B cell (primary cell): ENCODE measurements at regions of chr10 and their contacts with region 1.

Region 1: GRCh38 chr10:80504158-80504811 is 33.4 kb upstream of the SH2D4B start:
- DNase-seq: peak; percentile 39
- ATAC-seq: peak; percentile 31
- H3K4me3 ChIP-seq: no peak overlapping the region
- H3K4me3 Mint-ChIP-seq: peak overlapping the region; percentile 34
- H3K27ac ChIP-seq: peak overlapping the region; percentile 5 to 19
- H3K27ac Mint-ChIP-seq: peak overlapping the region; percentile 85
- H3K4me1 ChIP-seq: peaks cover 54 to 66% of the 10 kb centered on the region in 2 donors
- H3K4me1 Mint-ChIP-seq: peaks cover 59% of the 10 kb centered on the region
- H3K27me3 ChIP-seq: no peaks in the 10 kb centered on the region
- H3K27me3 Mint-ChIP-seq: no peaks in the 10 kb centered on the region
- CTCF ChIP-seq: no peak

Region 2: GRCh38 chr10:80372675-80373074 is 131.6 kb before region 1 on chr10:
- CTCF ChIA-PET with region 1: interaction called, 273 read pairs
- POLR2A ChIA-PET with region 1: no interaction called
- intact Hi-C with region 1: no loop called
- DNase-seq: no peak
- ATAC-seq: no peak
- H3K4me3 ChIP-seq: no peak overlapping the region
- H3K4me3 Mint-ChIP-seq: no peak overlapping the region
- H3K27ac ChIP-seq: no peak overlapping the region
- H3K27ac Mint-ChIP-seq: no peak overlapping the region
- H3K4me1 ChIP-seq: no peaks in the 10 kb centered on the region
- H3K4me1 Mint-ChIP-seq: no peaks in the 10 kb centered on the region
- H3K27me3 ChIP-seq: no peaks in the 10 kb centered on the region
- H3K27me3 Mint-ChIP-seq: peaks cover 7% of the 10 kb centered on the region
- CTCF ChIP-seq: no peak

Region 3: GRCh38 chr10:80408242-80409101 is 95.8 kb before region 1 on chr10 and contains the start of gene PRXL2A:
- CTCF ChIA-PET with region 1: interaction called, 28 read pairs
- POLR2A ChIA-PET with region 1: no interaction called
- intact Hi-C with region 1: no loop called
- DNase-seq: peak; percentile 83
- ATAC-seq: peak; percentile 98
- H3K4me3 ChIP-seq: peak within 1 kb of the TSS; percentile 55 to 82 (median 77)
- H3K4me3 Mint-ChIP-seq: peak within 1 kb of the TSS; percentile 91
- H3K27ac ChIP-seq: peak within 1 kb of the TSS in 1 of 2 donors; percentile 13
- H3K27ac Mint-ChIP-seq: peak within 1 kb of the TSS; percentile 64
- H3K4me1 ChIP-seq: peaks cover 6 to 15% of the 10 kb centered on the region in 2 donors
- H3K4me1 Mint-ChIP-seq: peaks cover 13% of the 10 kb centered on the region
- H3K27me3 ChIP-seq: no peaks in the 10 kb centered on the region
- H3K27me3 Mint-ChIP-seq: peaks cover 5% of the 10 kb centered on the region
- CTCF ChIP-seq: no peak
- total RNA-seq, gene PRXL2A: 9.4 and 11.2 TPM in 2 replicates

Region 4: GRCh38 chr10:80431577-80431976 is 72.7 kb before region 1 on chr10:
- CTCF ChIA-PET with region 1: interaction called, 14 read pairs
- POLR2A ChIA-PET with region 1: interaction called, 4 read pairs
- intact Hi-C with region 1: no loop called
- DNase-seq: no peak
- ATAC-seq: no peak
- H3K4me3 ChIP-seq: no peak overlapping the region
- H3K4me3 Mint-ChIP-seq: no peak overlapping the region
- H3K27ac ChIP-seq: no peak overlapping the region
- H3K27ac Mint-ChIP-seq: no peak overlapping the region
- H3K4me1 ChIP-seq: no peaks in the 10 kb centered on the region
- H3K4me1 Mint-ChIP-seq: no peaks in the 10 kb centered on the region
- H3K27me3 ChIP-seq: no peaks in the 10 kb centered on the region
- H3K27me3 Mint-ChIP-seq: no peaks in the 10 kb centered on the region
- CTCF ChIP-seq: no peak

Region 5: GRCh38 chr10:80444646-80445319 is 59.5 kb before region 1 on chr10:
- CTCF ChIA-PET with region 1: interaction called, 500 read pairs
- POLR2A ChIA-PET with region 1: interaction called, 4 read pairs
- intact Hi-C with region 1: loop called (anchors 1 kb)
- DNase-seq: peak; percentile 80
- ATAC-seq: peak; percentile 88
- H3K4me3 ChIP-seq: no peak overlapping the region
- H3K4me3 Mint-ChIP-seq: no peak overlapping the region
- H3K27ac ChIP-seq: no peak overlapping the region
- H3K27ac Mint-ChIP-seq: no peak overlapping the region
- H3K4me1 ChIP-seq: peaks cover 0 to 6% of the 10 kb centered on the region in 2 donors
- H3K4me1 Mint-ChIP-seq: peaks cover 9% of the 10 kb centered on the region
- H3K27me3 ChIP-seq: no peaks in the 10 kb centered on the region
- H3K27me3 Mint-ChIP-seq: no peaks in the 10 kb centered on the region
- CTCF ChIP-seq: peak; percentile 58

Region 6: GRCh38 chr10:80472234-80473095 is 31.8 kb before region 1 on chr10:
- CTCF ChIA-PET with region 1: interaction called, 51 read pairs
- POLR2A ChIA-PET with region 1: interaction called, 4 read pairs
- intact Hi-C with region 1: loop called (anchors 1 kb)
- DNase-seq: peak; percentile 63
- ATAC-seq: peak; percentile 88
- H3K4me3 ChIP-seq: no peak overlapping the region
- H3K4me3 Mint-ChIP-seq: peak overlapping the region; percentile 60
- H3K27ac ChIP-seq: peak overlapping the region; percentile 49 to 75
- H3K27ac Mint-ChIP-seq: peak overlapping the region; percentile 89
- H3K4me1 ChIP-seq: peaks cover 41 to 48% of the 10 kb centered on the region in 2 donors
- H3K4me1 Mint-ChIP-seq: peaks cover 61% of the 10 kb centered on the region
- H3K27me3 ChIP-seq: no peaks in the 10 kb centered on the region
- H3K27me3 Mint-ChIP-seq: no peaks in the 10 kb centered on the region
- CTCF ChIP-seq: no peak

Region 7: DNA sequence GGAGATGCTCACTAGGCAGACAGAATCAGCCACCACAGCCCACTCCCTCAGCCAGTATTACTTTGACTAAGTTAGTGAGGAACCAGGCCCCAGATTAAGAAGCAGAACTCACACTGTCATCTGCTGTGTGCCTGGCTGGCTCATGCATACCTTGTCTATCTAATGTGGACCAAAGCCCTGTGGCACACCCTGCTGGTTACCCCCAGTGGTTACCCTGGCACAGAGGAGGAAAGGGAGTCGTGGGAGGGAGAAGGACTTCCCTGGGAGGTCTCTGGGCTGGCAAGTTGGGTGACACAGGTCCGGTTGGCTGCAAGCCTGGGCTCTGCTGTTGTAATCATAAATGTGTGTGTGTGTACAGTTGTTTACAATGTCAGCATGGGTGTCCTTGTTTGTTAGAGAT is 26.0 kb after region 1 on chr10:
- CTCF ChIA-PET with region 1: interaction called, 3 read pairs
- POLR2A ChIA-PET with region 1: no interaction called
- intact Hi-C with region 1: loop called (anchors 1 kb)
- DNase-seq: peak; percentile 21
- ATAC-seq: peak; percentile 56
- H3K4me3 ChIP-seq: no peak overlapping the region
- H3K4me3 Mint-ChIP-seq: no peak overlapping the region
- H3K27ac ChIP-seq: no peak overlapping the region
- H3K27ac Mint-ChIP-seq: no peak overlapping the region
- H3K4me1 ChIP-seq: peaks cover 0 to 4% of the 10 kb centered on the region in 2 donors
- H3K4me1 Mint-ChIP-seq: peaks cover 5% of the 10 kb centered on the region
- H3K27me3 ChIP-seq: no peaks in the 10 kb centered on the region
- H3K27me3 Mint-ChIP-seq: peaks cover 4% of the 10 kb centered on the region
- CTCF ChIP-seq: no peak

Region 8: GRCh38 chr10:80996615-80997193 is 492.4 kb after region 1 on chr10:
- CTCF ChIA-PET with region 1: no interaction called
- POLR2A ChIA-PET with region 1: no interaction called
- intact Hi-C with region 1: no loop called
- DNase-seq: no peak
- ATAC-seq: no peak
- H3K4me3 ChIP-seq: no peak overlapping the region
- H3K4me3 Mint-ChIP-seq: no peak overlapping the region
- H3K27ac ChIP-seq: no peak overlapping the region
- H3K27ac Mint-ChIP-seq: no peak overlapping the region
- H3K4me1 ChIP-seq: no peaks in the 10 kb centered on the region
- H3K4me1 Mint-ChIP-seq: no peaks in the 10 kb centered on the region
- H3K27me3 ChIP-seq: no peaks in the 10 kb centered on the region
- H3K27me3 Mint-ChIP-seq: peaks cover 4% of the 10 kb centered on the region
- CTCF ChIP-seq: no peak